Prostate gland (tissue), 2 donors: ENCODE measurements at regions of chr19 and their contacts with region 1.

Region 1: GRCh38 chr19:37691881-37692504 is 27.6 kb downstream of the ZNF607 start:
- DNase-seq: peak; percentile 69
- H3K4me3 ChIP-seq: peak overlapping the region; percentile 49 to 59
- H3K27ac ChIP-seq: peak overlapping the region; percentile 52 to 69
- H3K4me1 ChIP-seq: no peaks in the 10 kb centered on the region
- H3K27me3 ChIP-seq: no peaks in the 10 kb centered on the region
- CTCF ChIP-seq: no peak
- POLR2A ChIP-seq: no peak

Region 2: DNA sequence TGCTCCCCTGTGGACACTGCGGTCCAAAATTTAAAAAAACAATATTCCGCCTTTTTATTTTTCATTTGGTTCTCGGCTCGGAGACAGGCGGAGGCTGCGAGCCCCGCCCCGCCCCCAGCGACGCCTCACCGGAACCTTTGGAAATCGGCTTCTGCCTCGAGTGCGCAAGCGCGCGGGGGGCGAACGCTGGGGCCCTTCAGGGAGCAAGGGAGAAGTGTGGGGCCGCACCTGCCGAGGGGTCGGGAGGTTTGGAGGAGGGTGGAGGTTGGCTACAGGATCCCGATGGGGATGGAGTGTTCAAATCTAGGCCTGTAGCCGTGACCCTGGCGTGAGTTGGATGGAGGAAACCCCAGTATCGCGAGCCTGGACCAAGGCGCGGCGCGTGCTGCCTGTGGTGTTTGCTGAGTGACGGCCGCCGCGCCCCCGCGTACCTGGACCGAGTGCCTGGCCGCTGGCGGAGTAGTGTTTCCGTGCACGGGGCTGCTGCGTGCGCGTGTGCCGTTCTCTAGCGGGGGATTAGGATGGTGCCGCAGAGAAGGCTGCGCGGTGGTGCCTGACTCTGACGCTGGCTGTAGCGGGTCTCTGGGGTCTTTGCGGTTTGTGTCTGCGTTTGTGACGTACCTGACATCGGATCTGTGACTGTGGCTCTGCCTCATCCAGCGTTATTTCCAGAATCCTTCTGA is 36.2 kb before region 1 on chr19:
- intact Hi-C with region 1: loop called (anchors 5 kb)
- DNase-seq: peak; percentile 84
- H3K4me3 ChIP-seq: peak overlapping the region; percentile 71 to 80
- H3K27ac ChIP-seq: peak overlapping the region; percentile 95 to 98
- H3K4me1 ChIP-seq: no peaks in the 10 kb centered on the region
- H3K27me3 ChIP-seq: no peaks in the 10 kb centered on the region
- CTCF ChIP-seq: peak in 1 of 4 experiments; percentile 5
- POLR2A ChIP-seq: peak; percentile 12

Region 3: GRCh38 chr19:38004521-38005223 is 312.7 kb after region 1 on chr19:
- intact Hi-C with region 1: no loop called
- DNase-seq: peak; percentile 93
- H3K4me3 ChIP-seq: peak overlapping the region; percentile 13 to 30
- H3K27ac ChIP-seq: peak overlapping the region; percentile 81 to 84
- H3K4me1 ChIP-seq: peaks cover 11% of the 10 kb centered on the region
- H3K27me3 ChIP-seq: no peaks in the 10 kb centered on the region
- CTCF ChIP-seq: no peak
- POLR2A ChIP-seq: peak; percentile 75